HepG2 (cell line): ENCODE measurements at regions of chr3 and their contacts with region 1.

Region 1: GRCh38 chr3:142129516-142130171 is 19.7 kb downstream of the TFDP2 start:
- DNase-seq: no peak
- ATAC-seq: no peak
- H3K4me3 ChIP-seq: no peak overlapping the region
- H3K27ac ChIP-seq: no peak overlapping the region
- H3K4me1 ChIP-seq: no peaks in the 10 kb centered on the region
- H3K27me3 ChIP-seq: no peaks in the 10 kb centered on the region; a peak in 1 of 5 replicates
- CTCF ChIP-seq: no peak
- EP300 ChIP-seq: no peak
- POLR2A ChIP-seq: no peak
- RAD21 ChIP-seq: no peak

Region 2: GRCh38 chr3:142148792-142149672 is 19.4 kb after region 1 on chr3 and contains the start of gene TFDP2:
- CTCF ChIA-PET with region 1: interaction called, 7 read pairs
- POLR2A ChIA-PET with region 1: no interaction called
- in situ Hi-C with region 1: no loop called
- intact Hi-C with region 1: loop called (anchors 2 kb)
- DNase-seq: peak; percentile 78
- ATAC-seq: peak; percentile 98
- H3K4me3 ChIP-seq: peak within 1 kb of the TSS; percentile 61 to 84 (median 82)
- H3K27ac ChIP-seq: peak within 1 kb of the TSS; percentile 97
- H3K4me1 ChIP-seq: peaks cover 34% of the 10 kb centered on the region
- H3K27me3 ChIP-seq: no peaks in the 10 kb centered on the region
- CTCF ChIP-seq: no peak
- EP300 ChIP-seq: no peak; a peak in 1 of 4 replicates
- POLR2A ChIP-seq: peak; percentile 62 to 72; a peak in 3 of 4 replicates
- RAD21 ChIP-seq: peak; percentile 55; the same call in 1 of the 2 replicates
- total RNA-seq, gene TFDP2: 37.4 and 46.2 TPM in 2 replicates

Region 3: GRCh38 chr3:142188846-142189245 is 59.2 kb after region 1 on chr3:
- CTCF ChIA-PET with region 1: no interaction called
- POLR2A ChIA-PET with region 1: no interaction called
- in situ Hi-C with region 1: no loop called
- intact Hi-C with region 1: no loop called
- DNase-seq: no peak
- ATAC-seq: no peak
- H3K4me3 ChIP-seq: no peak overlapping the region
- H3K27ac ChIP-seq: no peak overlapping the region
- H3K4me1 ChIP-seq: no peaks in the 10 kb centered on the region
- H3K27me3 ChIP-seq: no peaks in the 10 kb centered on the region
- CTCF ChIP-seq: no peak
- EP300 ChIP-seq: no peak
- POLR2A ChIP-seq: no peak
- RAD21 ChIP-seq: no peak

Region 4: DNA sequence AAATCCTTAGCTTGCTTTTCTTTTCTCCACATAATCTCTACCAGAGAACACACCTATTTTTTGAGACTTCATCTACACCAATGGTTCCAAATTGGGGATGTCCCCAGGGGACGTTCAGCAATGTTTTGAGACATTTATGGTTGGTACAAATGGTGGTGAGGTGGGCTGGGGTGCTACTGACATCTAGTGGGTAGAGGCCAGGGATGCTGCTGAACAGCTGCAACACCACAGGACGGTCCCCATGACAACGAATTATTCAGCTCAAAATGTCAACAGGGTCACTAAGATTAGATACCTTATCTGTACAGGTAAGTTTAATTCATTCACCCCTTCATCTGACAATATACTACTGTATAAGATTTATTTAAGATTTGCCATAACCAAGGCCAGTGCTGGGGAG is 81.4 kb after region 1 on chr3:
- CTCF ChIA-PET with region 1: no interaction called
- POLR2A ChIA-PET with region 1: no interaction called
- in situ Hi-C with region 1: no loop called
- intact Hi-C with region 1: loop called (anchors 5 kb)
- DNase-seq: no peak
- ATAC-seq: peak; percentile 65
- H3K4me3 ChIP-seq: no peak overlapping the region
- H3K27ac ChIP-seq: no peak overlapping the region
- H3K4me1 ChIP-seq: no peaks in the 10 kb centered on the region
- H3K27me3 ChIP-seq: no peaks in the 10 kb centered on the region
- CTCF ChIP-seq: peak; percentile 55
- EP300 ChIP-seq: no peak
- POLR2A ChIP-seq: no peak
- RAD21 ChIP-seq: no peak

Region 5: DNA sequence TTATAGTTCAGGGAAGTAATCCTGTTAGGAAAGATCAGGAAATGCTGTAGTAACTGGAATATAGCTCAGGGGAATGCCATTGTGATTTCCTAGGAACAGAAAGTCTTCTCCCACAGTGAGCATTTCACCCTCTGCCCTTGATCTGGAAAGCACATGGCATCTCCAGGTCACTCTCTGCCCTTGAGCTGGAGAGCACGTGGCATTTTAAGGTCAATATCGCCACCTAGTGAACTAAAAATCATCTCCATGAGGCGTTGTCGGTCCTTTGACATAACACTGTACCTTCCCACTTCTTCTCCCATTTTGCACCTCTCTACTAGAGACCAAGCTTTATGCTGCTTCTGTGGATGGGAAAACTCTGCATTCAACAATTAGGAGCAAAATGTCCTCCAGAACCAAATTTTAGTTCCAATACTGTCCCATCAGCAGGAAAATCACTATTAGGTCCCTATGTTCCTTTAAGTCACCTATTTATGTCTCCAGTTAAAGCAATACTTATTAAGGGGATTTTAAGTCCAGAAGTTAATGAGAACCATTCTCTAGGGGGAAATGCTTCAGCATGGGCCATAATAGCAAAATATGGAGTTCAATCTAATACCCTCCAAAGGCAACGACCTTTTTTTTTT is 150.4 kb after region 1 on chr3:
- CTCF ChIA-PET with region 1: interaction called, 10 read pairs
- POLR2A ChIA-PET with region 1: no interaction called
- in situ Hi-C with region 1: loop called (anchors 5 kb)
- intact Hi-C with region 1: loop called (anchors 1 kb)
- DNase-seq: peak; percentile 75
- ATAC-seq: peak; percentile 99
- H3K4me3 ChIP-seq: no peak overlapping the region
- H3K27ac ChIP-seq: no peak overlapping the region
- H3K4me1 ChIP-seq: peaks cover 6% of the 10 kb centered on the region; the same call in 1 of the 2 replicates
- H3K27me3 ChIP-seq: no peaks in the 10 kb centered on the region
- CTCF ChIP-seq: peak; percentile 94
- EP300 ChIP-seq: no peak
- POLR2A ChIP-seq: no peak
- RAD21 ChIP-seq: peak; percentile 87